ENCODE measurements at regions of chr1 and their contacts with region 1.

Region 1: GRCh38 chr1:181142096-181142958 is 53.8 kb downstream of the IER5 start:
- DNase-seq: peak; percentile 94
- ATAC-seq: peak; percentile 92
- H3K4me3 Mint-ChIP-seq: peak overlapping the region; percentile 52
- H3K27ac Mint-ChIP-seq: peak overlapping the region; percentile 70
- H3K4me1 Mint-ChIP-seq: peaks cover 66% of the 10 kb centered on the region
- H3K27me3 Mint-ChIP-seq: peaks cover 13% of the 10 kb centered on the region

Region 2: DNA sequence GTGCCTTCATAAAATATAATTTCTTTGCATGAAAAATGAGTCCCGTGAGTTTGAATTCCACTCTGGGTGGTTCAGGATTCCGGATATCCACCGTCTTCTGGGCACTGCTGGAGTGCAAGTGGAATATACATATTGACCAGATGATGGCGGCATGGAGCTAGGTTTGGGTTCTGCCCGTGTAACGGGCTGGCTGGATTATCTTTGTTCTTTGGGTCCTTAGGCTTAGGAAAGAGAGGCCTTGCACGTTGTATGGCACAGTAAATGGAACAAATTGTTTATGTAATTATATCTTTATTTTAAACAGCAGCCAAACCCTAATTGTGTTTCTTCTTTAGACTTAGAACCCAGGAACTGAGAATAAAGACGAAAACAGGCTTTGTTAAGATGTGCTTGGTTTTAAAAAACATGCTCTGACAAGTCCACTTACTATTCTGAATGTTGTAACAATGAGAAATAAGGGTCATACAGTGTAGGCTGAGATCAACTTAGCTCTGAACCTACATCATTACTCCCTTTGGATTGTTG is 626.4 kb before region 1 on chr1:
- CTCF ChIA-PET with region 1: interaction called, 12 read pairs
- POLR2A ChIA-PET with region 1: no interaction called
- DNase-seq: peak; percentile 73
- ATAC-seq: peak; percentile 100
- H3K4me3 Mint-ChIP-seq: no peak overlapping the region
- H3K27ac Mint-ChIP-seq: no peak overlapping the region
- H3K4me1 Mint-ChIP-seq: peaks cover 4% of the 10 kb centered on the region
- H3K27me3 Mint-ChIP-seq: peaks cover 3% of the 10 kb centered on the region

Region 3: GRCh38 chr1:181033799-181034451 is 108.4 kb before region 1 on chr1 and contains the start of gene MR1:
- CTCF ChIA-PET with region 1: interaction called, 206 read pairs
- POLR2A ChIA-PET with region 1: interaction called, 4 read pairs
- DNase-seq: peak; percentile 71
- ATAC-seq: peak; percentile 97
- H3K4me3 Mint-ChIP-seq: peak within 1 kb of the TSS; percentile 97
- H3K27ac Mint-ChIP-seq: peak within 1 kb of the TSS; percentile 97
- H3K4me1 Mint-ChIP-seq: peaks cover 55% of the 10 kb centered on the region
- H3K27me3 Mint-ChIP-seq: no peaks in the 10 kb centered on the region
- total RNA-seq, gene MR1: 27.9 to 29.3 TPM

Region 4: DNA sequence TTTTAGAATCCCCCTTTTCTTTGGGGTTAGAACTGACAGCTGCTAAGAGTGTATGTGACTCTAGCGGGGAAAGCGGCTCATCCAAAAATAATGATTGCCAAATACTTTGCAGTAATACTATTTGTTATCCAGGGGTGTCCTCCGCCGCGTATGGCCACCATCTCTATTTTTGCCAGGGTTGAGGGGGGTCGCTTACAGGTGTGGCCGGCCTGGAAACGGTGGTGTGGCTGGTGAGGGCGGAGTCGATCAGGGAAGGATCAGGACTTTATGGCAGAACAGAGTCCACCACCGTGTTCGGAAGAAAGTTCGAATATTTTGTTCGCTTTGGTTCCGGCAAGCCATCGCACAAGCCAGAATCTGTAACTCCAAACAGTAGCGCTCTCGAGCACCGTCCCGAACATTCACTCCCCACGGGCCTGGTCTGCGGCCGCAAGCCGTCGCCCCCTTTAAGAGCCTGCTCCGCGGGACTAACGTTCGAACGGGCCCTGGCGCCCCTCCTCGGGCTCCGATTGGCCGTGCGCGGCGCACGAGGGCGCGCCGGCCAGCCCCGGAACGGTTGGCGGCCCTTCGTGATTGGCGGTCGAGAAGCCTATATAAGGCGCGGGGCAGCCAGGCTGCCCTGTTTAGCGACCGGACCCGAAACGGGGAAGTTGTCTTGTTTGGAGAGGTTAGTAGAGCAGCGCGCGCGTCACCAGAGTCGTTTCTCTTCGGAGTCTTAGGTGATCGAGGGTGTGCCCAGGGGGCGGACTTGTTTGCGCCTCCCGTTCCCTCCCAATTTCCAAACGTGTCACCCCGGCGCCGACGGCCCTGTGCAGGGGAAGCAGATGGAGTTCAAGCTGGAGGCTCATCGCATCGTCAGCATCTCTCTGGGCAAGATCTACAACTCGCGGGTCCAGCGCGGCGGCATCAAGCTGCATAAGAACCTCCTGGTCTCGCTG is 54.0 kb before region 1 on chr1 and contains the start of gene IER5:
- CTCF ChIA-PET with region 1: interaction called, 395 read pairs
- POLR2A ChIA-PET with region 1: interaction called, 114 read pairs
- DNase-seq: peak; percentile 97
- ATAC-seq: peak; percentile 80
- H3K4me3 Mint-ChIP-seq: peak within 1 kb of the TSS; percentile 97
- H3K27ac Mint-ChIP-seq: peak within 1 kb of the TSS; percentile 97
- H3K4me1 Mint-ChIP-seq: peaks cover 53% of the 10 kb centered on the region
- H3K27me3 Mint-ChIP-seq: peaks cover 3% of the 10 kb centered on the region
- total RNA-seq, gene IER5: 37.2 to 38.0 TPM

Region 5: DNA sequence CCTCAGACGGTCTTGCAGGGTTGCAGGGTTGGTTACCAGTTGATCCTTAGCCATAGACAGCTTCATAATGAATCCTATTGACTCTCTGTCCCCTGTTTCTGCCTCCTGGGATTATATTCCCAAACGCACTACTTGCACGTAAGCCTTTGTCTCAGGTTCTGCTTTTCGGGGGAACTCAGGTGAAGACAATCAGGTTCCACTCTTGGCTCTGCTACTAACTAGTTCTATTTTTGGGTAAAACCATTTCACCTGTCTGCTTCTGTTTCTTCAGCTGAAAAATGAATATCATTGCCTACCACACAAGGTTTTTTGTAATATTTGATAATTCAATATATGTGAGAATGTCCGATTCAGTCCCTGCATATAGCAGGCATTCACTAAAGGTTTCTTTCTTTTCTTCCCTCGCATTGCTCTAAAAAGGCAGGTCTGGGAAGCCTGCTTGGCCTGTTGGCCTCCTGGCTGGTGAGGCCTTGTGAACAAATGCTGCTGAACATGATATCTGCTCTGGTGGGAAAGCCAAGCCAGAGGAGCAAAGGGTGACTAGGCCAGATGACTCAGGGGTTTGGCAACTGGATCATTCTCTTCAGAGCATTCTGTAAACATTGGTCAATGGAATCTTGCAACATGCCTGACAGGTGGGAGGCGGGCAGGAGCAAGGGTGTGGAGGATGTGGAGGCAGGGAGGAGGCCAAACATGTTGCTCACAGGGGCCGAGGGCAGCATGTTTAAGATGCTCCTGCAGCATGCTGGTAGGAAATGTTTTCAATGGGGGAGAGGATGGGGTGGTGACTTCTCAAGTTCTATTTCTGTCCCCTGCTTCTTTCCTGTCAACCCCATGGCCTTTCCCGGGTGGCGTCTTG is 30.0 kb before region 1 on chr1:
- CTCF ChIA-PET with region 1: interaction called, 114 read pairs
- POLR2A ChIA-PET with region 1: interaction called, 3 read pairs
- DNase-seq: no peak
- ATAC-seq: no peak
- H3K4me3 Mint-ChIP-seq: no peak overlapping the region
- H3K27ac Mint-ChIP-seq: no peak overlapping the region
- H3K4me1 Mint-ChIP-seq: peaks cover 12% of the 10 kb centered on the region
- H3K27me3 Mint-ChIP-seq: peaks cover 39% of the 10 kb centered on the region

Region 6: DNA sequence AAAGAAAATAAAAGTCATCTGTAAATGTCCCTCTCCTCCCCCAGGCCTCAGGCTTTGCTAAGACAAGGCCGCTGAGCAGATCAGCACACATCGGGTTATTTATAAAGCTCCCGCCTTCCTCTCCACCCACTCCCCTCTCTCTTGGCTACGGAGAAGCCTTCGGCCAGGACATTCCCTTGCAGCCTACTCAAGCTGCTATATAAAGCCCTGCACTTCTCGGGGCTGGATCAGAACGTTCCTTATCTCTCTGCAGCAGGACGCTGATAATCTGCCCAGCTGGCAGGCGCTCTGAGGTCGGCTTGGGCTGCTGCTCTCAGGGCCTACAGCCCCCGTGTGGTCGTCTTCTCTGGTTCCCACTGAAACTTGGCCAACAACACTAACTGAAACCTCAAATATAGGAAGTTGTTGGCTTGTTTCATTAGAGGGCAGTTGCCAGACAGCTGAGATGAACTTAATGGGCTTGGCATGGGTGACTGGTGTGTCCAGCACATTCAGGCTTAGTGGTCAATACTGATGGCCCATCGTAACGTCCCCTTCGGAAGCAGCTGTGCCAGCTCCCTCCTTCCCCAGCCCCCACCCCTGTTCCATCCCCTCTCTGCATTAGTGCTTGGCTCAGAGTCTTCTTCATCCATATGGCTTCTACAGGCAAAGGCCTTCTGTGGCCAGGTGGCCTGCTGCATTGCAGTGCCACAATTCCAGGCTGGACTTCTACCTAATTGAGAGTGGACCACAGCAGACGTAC is 10.7 kb after region 1 on chr1:
- CTCF ChIA-PET with region 1: interaction called, 63 read pairs
- POLR2A ChIA-PET with region 1: interaction called, 3 read pairs
- DNase-seq: no peak
- ATAC-seq: no peak
- H3K4me3 Mint-ChIP-seq: no peak overlapping the region
- H3K27ac Mint-ChIP-seq: no peak overlapping the region
- H3K4me1 Mint-ChIP-seq: peaks cover 55% of the 10 kb centered on the region
- H3K27me3 Mint-ChIP-seq: peaks cover 16% of the 10 kb centered on the region

Measured in activated CD8-positive, alpha-beta T cell treated with anti-CD3 and anti-CD28 coated beads, Interleukin-2, amount 10 ng/mL, durations not matched to agents 7 days and 5 days (primary cell).